Adrenal gland (tissue), 19 donors: ENCODE measurements at regions of chr1 and their contacts with region 1.

Region 1: DNA sequence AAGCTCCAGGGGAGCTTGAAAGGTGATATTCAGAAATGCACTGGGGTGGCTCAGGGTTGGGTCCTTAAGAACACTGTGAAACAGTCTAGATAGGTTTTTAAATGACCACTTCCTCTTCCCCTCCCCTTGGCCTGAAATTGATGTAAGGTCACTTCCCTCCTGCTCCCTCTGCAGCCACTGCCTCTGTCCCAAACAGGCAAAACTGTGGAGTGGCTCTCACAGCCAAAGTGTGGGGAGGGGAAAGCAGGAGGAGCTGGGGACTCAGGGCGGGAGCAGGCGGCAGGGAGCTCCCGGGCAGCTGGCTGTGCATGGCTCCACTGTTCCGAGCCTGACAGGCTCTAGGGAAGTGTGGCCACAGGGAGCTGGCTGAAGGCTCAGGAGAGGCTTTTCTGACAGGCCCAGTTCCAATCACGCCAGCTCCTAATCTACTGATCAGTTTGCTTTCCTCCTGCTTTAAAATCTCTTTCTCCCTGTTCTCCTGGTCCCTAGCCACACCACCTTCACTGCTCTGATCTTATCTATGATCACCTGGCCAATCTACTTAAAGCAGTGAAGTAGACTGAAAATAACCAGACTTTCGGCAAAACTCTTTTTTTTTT is 5.1 kb upstream of the CSRP1 start:
- DNase-seq: peak in 5 of 7 donors; percentile 37 to 76 (median 49)
- H3K4me3 ChIP-seq: no peak overlapping the region
- H3K27ac ChIP-seq: peak overlapping the region in 2 of 5 donors; percentile 55 to 72
- H3K4me1 ChIP-seq: peaks cover 0 to 24% of the 10 kb centered on the region in 2 donors
- H3K27me3 ChIP-seq: no peaks in the 10 kb centered on the region
- CTCF ChIP-seq: no peak
- POLR2A ChIP-seq: no peak

Region 2: DNA sequence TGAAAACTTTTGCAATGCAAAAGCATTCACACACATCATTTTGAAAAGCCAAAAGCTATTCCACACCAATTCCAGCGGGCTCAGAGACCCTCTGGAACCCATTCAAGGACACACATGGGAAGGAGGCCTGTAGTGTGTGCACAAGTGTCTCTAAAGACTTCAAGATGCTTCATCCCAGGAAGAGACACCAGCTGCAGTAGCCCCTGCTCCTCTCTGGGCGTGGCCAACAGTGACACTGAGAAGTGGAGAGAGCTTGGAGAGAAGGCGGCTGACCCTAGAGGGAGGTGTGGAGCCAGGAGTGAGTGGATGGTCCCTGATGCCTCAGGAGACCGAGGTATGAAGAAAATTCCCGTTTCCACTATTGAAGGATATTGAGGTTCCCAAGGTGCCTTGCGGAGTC is 75.6 kb before region 1 on chr1:
- intact Hi-C with region 1: loop called in 1 of 2 experiments (anchors 10 kb)
- DNase-seq: no peak
- H3K4me3 ChIP-seq: no peak overlapping the region
- H3K27ac ChIP-seq: no peak overlapping the region
- H3K4me1 ChIP-seq: no peaks in the 10 kb centered on the region
- H3K27me3 ChIP-seq: no peaks in the 10 kb centered on the region
- CTCF ChIP-seq: no peak
- POLR2A ChIP-seq: no peak

Region 3: GRCh38 chr1:201481761-201482493 is 30.1 kb before region 1 on chr1:
- intact Hi-C with region 1: loop called (anchors 2 kb)
- DNase-seq: peak; percentile 79 to 95 (median 85)
- H3K4me3 ChIP-seq: peak overlapping the region in 1 of 4 donors; percentile 30
- H3K27ac ChIP-seq: peak overlapping the region in 1 of 5 donors; percentile 38
- H3K4me1 ChIP-seq: peaks cover 13 to 19% of the 10 kb centered on the region in 2 donors
- H3K27me3 ChIP-seq: peaks cover 6% of the 10 kb centered on the region
- CTCF ChIP-seq: peak; percentile 72 to 97 (median 91)
- POLR2A ChIP-seq: no peak